GM12878 (cell line): ENCODE measurements at regions of chr11 and their contacts with region 1.

Region 1: GRCh38 chr11:63838678-63839507 is at the start of gene MARK2:
- DNase-seq: peak; percentile 77
- ATAC-seq: peak; percentile 88
- H3K4me3 ChIP-seq: peak within 1 kb of the TSS; percentile 99
- H3K27ac ChIP-seq: peak within 1 kb of the TSS; percentile 82
- H3K4me1 ChIP-seq: peaks cover 22% of the 10 kb centered on the region
- H3K27me3 ChIP-seq: no peaks in the 10 kb centered on the region
- CTCF ChIP-seq: no peak
- EP300 ChIP-seq: no peak
- POLR2A ChIP-seq: peak; percentile 75
- RAD21 ChIP-seq: no peak
- polyA plus RNA-seq, gene MARK2: 0.19 to 0.40 TPM

Region 2: DNA sequence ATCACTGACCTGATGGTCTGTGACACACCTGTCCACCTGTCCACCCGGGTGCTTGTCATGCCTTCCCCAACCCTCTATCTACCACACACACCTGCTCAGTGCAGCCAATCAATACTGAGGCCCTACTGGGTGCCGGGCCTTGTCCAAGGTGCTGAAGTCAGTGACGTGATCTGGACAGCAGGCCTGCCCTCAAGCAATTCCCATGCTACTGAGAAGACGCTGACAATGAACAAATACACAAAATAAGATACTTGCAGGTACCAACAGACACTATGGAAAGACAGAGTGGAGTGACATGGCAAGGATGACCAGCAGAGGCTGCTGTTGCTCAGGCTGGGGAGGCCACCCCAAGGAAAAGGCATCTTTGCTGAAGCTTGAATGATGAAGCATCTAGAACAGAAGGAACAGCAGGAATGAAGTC is 245.9 kb before region 1 on chr11:
- CTCF ChIA-PET with region 1: no interaction called
- POLR2A ChIA-PET with region 1: no interaction called
- RAD21 ChIA-PET with region 1: no interaction called
- SMC1A ChIA-PET with region 1: no interaction called
- in situ Hi-C with region 1: no loop called
- intact Hi-C with region 1: no loop called
- DNase-seq: no peak
- ATAC-seq: peak; percentile 69
- H3K4me3 ChIP-seq: no peak overlapping the region
- H3K27ac ChIP-seq: no peak overlapping the region
- H3K4me1 ChIP-seq: no peaks in the 10 kb centered on the region
- H3K27me3 ChIP-seq: no peaks in the 10 kb centered on the region
- CTCF ChIP-seq: peak; percentile 66 to 79 (median 75)
- EP300 ChIP-seq: no peak
- POLR2A ChIP-seq: no peak
- RAD21 ChIP-seq: peak; percentile 70

Region 3: DNA sequence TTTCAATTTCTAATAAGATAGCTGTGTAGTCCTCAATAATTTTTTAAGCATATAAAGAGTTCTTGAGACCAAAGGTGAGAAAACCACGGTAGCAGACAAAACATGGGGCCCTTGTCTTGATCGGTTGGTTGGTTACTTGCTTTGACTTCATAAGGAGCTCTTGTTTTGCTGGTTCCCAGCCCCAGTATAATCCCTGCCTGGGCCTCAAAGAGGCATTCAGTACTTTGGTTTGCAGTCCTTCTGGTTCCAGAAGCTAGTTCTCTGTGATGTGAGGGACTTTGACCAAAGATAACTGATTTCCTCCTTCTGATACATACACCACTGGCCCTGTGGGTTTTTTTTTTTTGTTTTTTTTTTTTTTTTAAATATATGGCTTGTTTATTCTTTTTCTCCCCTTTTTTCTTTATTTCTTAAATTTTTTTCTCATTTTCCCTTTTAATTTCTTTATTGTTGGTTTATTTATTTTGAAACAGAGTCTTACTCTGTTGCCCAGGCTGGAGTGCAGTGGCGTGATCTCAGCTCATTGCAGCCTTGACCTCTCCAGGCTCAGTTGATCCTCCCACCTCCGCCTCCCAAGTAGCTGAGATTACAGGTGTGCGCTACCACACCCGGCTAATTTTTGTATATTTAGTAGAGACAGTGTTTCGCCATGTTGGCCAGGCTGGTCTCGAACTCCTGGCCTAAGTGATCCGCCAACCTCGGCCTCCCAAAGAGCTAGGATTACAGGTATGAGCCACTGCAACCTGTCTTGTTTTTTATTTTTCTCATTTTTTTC is 17.3 kb after region 1 on chr11:
- CTCF ChIA-PET with region 1: interaction called, 22 read pairs
- POLR2A ChIA-PET with region 1: interaction called, 8 read pairs
- RAD21 ChIA-PET with region 1: interaction called, 14 read pairs
- SMC1A ChIA-PET with region 1: interaction called, 153 read pairs
- in situ Hi-C with region 1: no loop called
- intact Hi-C with region 1: no loop called
- DNase-seq: no peak
- ATAC-seq: peak; percentile 64
- H3K4me3 ChIP-seq: no peak overlapping the region
- H3K27ac ChIP-seq: no peak overlapping the region; the same call in 1 of the 2 replicates
- H3K4me1 ChIP-seq: peaks cover 7% of the 10 kb centered on the region; the same call in 1 of the 2 replicates
- H3K27me3 ChIP-seq: no peaks in the 10 kb centered on the region
- CTCF ChIP-seq: no peak
- EP300 ChIP-seq: no peak
- POLR2A ChIP-seq: no peak
- RAD21 ChIP-seq: no peak

Region 4: DNA sequence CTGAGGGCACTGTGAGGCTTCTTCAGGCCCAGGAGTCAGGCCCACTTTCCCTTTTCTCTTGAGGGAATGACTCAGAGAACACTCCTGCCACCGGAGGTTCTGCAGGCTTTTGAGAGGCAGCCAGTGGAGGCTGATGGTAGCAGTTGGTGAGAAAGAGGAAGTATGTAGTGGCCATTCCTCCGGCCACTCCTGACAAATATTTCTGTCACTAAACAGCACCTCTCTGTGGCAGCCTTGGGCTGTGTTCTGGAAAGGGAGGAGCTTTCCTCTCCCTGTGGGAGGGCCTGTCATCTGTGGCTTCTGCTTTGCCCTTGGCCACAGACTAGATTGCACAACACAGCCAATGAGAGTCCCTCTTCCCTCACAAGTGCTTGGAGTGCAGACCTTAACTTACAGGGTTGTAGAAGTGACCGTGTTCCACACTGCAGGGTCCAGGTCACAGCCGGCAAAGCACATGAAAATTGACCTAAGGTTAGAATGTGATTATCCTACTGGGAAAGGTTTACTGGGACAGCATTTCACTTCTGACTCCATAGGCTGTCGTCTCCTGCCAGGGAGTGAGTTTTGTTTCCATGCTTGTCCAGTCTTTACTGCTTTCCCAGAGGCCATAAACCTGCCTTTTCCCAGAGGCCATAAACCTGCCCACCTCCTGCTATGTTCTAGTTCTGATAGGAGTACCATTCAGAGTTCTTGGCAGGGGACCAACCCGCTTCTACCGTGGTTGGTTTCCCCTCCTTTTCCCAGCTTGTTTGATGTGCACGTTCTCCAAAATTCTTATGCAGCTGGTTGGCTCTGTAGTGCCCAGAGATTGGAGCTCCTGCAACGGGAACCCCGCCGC is 33.3 kb after region 1 on chr11:
- CTCF ChIA-PET with region 1: interaction called, 60 read pairs
- POLR2A ChIA-PET with region 1: interaction called, 5 read pairs
- RAD21 ChIA-PET with region 1: interaction called, 52 read pairs
- SMC1A ChIA-PET with region 1: interaction called, 153 read pairs
- in situ Hi-C with region 1: no loop called
- intact Hi-C with region 1: loop called (anchors 1 kb)
- DNase-seq: peak; percentile 77
- ATAC-seq: peak; percentile 99
- H3K4me3 ChIP-seq: no peak overlapping the region
- H3K27ac ChIP-seq: no peak overlapping the region
- H3K4me1 ChIP-seq: peaks cover 36% of the 10 kb centered on the region
- H3K27me3 ChIP-seq: no peaks in the 10 kb centered on the region
- CTCF ChIP-seq: peak; percentile 54 to 78 (median 57); a peak in 5 of 6 replicates
- EP300 ChIP-seq: no peak
- POLR2A ChIP-seq: no peak
- RAD21 ChIP-seq: peak; percentile 73

Region 5: DNA sequence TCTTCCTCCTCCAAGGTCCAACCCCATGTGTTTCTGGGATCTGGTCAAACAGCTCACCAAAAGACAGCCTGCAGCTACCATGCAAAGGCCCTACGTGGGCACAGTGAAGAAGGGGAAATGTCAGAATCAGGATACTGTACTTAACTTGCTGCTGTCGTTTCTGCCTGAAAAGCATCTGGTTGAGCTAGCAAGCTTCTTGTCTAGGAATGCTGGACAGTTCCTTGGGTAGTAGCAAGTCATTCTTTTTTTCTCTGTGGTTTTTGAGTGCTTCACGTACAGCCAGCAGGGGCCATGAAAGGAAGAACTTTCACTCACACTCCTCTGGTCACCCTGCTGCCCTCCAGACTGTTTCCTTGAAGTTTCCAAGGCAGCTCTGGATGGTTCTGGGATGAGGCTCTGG is 53.3 kb after region 1 on chr11:
- CTCF ChIA-PET with region 1: interaction called, 15 read pairs
- POLR2A ChIA-PET with region 1: no interaction called
- RAD21 ChIA-PET with region 1: interaction called, 10 read pairs
- SMC1A ChIA-PET with region 1: interaction called, 3 read pairs
- in situ Hi-C with region 1: no loop called
- intact Hi-C with region 1: no loop called
- DNase-seq: no peak
- ATAC-seq: no peak
- H3K4me3 ChIP-seq: no peak overlapping the region
- H3K27ac ChIP-seq: no peak overlapping the region
- H3K4me1 ChIP-seq: peaks cover 20% of the 10 kb centered on the region
- H3K27me3 ChIP-seq: no peaks in the 10 kb centered on the region
- CTCF ChIP-seq: no peak
- EP300 ChIP-seq: no peak
- POLR2A ChIP-seq: no peak
- RAD21 ChIP-seq: no peak

Region 6: GRCh38 chr11:63916837-63917691 is 78.2 kb after region 1 on chr11 and contains the start of gene RCOR2:
- CTCF ChIA-PET with region 1: interaction called, 34 read pairs
- POLR2A ChIA-PET with region 1: interaction called, 4 read pairs
- RAD21 ChIA-PET with region 1: interaction called, 6 read pairs
- SMC1A ChIA-PET with region 1: interaction called, 8 read pairs
- in situ Hi-C with region 1: no loop called
- intact Hi-C with region 1: loop called (anchors 1 kb)
- DNase-seq: no peak
- ATAC-seq: peak; percentile 53
- H3K4me3 ChIP-seq: peak within 1 kb of the TSS; percentile 59
- H3K27ac ChIP-seq: no peak within 1 kb of the TSS
- H3K4me1 ChIP-seq: peaks cover 10% of the 10 kb centered on the region
- H3K27me3 ChIP-seq: peaks cover 0 to 3% of the 10 kb centered on the region in 2 experiments; a peak in 3 of 4 replicates
- CTCF ChIP-seq: no peak
- EP300 ChIP-seq: no peak
- POLR2A ChIP-seq: peak; percentile 56; the same call in 1 of the 2 replicates
- RAD21 ChIP-seq: no peak
- polyA plus RNA-seq, gene RCOR2: not detected

Region 7: DNA sequence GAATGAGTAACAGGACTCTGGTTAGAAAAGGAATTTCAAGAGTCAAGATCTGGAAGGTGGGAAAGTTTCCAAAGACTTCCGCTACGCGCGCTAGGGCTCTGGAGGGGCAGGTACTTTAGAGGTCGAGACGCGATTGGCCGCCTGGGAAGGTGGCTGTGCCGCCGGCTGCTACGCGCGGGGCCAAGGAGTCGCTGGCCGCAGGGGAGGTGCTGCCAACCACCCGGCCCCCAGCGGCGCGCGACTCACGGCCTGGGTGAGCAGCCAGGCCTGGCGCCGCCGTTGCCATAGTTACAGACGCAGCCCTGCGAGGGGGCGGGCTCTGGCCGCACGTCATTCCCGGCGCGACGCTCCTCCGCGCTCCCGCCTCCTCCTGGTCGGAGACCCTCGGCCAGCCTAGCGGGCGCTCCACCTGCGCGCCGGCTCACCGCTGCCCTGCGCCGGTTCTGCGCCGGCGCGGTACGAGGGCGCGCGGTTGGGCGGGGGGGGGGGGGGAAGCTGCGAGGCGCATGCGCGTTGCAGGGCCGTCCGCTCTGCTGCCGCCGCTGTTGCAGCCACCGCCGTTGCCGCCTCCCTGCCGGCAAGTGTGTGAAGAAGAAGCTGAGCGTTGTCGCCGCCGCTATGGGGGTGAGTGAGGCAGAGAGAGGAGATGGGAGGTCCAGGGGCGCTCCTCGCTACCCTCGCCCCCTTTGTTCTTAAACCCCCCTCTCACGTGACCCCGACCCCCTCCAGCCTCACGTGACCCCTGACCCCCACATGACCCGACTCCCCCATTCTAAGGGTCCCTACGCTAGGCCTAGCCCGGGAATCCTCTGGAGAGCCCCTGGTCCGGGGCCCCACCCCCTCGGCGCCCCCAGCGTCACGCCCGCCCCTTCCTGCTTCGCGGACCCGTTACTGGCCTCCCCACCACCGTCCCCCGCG is 99.8 kb after region 1 on chr11 and contains the start of gene NAA40:
- CTCF ChIA-PET with region 1: interaction called, 271 read pairs
- POLR2A ChIA-PET with region 1: interaction called, 3 read pairs
- RAD21 ChIA-PET with region 1: interaction called, 101 read pairs
- SMC1A ChIA-PET with region 1: interaction called, 234 read pairs
- in situ Hi-C with region 1: no loop called
- intact Hi-C with region 1: no loop called
- DNase-seq: peak; percentile 92
- ATAC-seq: peak; percentile 98
- H3K4me3 ChIP-seq: peak within 1 kb of the TSS; percentile 91
- H3K27ac ChIP-seq: peak within 1 kb of the TSS; percentile 72
- H3K4me1 ChIP-seq: peaks cover 21% of the 10 kb centered on the region; the same call in 1 of the 2 replicates
- H3K27me3 ChIP-seq: no peaks in the 10 kb centered on the region
- CTCF ChIP-seq: no peak
- EP300 ChIP-seq: 0 out of 4 replicates have a peak, but pooled peaks of 1 of the 2 experiments have one; percentile 27
- POLR2A ChIP-seq: peak; percentile 76
- RAD21 ChIP-seq: no peak
- polyA plus RNA-seq, gene NAA40: 4.8 to 6.0 TPM

Region 8: DNA sequence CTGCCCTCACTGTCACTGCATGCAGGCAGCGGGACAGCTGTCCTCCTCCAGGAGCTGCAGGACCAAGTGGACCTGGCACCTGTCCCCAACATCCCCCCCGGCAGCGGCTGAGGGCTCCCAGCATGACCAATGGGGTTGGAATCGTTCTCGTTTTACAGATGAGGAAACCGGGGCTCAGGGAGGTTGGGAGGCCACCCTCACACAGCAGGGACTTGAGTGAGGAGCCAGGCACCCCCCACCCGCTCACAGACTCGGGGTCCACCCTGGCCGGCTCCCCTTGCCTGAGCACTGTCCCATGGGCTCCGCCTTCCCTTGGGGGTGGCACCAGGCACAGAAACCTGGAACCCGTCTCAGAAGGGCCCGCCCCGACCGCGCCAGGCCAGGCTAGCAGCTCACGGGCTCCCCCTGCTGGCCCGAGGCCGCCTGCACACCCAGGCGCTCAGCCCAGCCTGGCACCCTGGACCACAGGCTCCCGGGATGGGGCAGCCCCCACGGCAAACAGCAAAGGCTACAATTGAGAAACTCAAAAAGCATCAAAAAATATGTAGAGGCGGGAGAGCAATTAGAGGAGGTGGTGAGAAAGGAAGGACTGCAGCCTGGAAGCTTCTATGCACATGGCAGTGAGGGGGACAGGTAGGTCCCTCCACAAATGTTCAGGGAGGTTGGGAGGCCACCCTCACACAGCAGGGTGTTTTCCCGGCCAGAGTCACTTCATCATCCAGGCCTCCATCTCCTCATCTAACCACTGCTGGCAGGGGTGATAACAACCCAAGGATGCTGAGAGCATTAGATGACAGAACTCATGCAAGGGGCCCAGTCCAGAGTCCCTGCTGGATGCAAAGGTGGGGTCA is 314.2 kb after region 1 on chr11:
- CTCF ChIA-PET with region 1: interaction called, 68 read pairs
- POLR2A ChIA-PET with region 1: interaction called, 4 read pairs
- RAD21 ChIA-PET with region 1: interaction called, 6 read pairs
- SMC1A ChIA-PET with region 1: interaction called, 12 read pairs
- in situ Hi-C with region 1: loop called (anchors 5 kb)
- intact Hi-C with region 1: loop called (anchors 2 kb)
- DNase-seq: no peak
- ATAC-seq: peak; percentile 97
- H3K4me3 ChIP-seq: no peak overlapping the region
- H3K27ac ChIP-seq: no peak overlapping the region
- H3K4me1 ChIP-seq: no peaks in the 10 kb centered on the region
- H3K27me3 ChIP-seq: no peaks in the 10 kb centered on the region
- CTCF ChIP-seq: peak; percentile 91 to 99 (median 99)
- EP300 ChIP-seq: no peak
- POLR2A ChIP-seq: no peak
- RAD21 ChIP-seq: peak; percentile 70